Gastrocnemius medialis (tissue), 4 donors: ENCODE measurements at regions of chr17 and their contacts with region 1.

Region 1: DNA sequence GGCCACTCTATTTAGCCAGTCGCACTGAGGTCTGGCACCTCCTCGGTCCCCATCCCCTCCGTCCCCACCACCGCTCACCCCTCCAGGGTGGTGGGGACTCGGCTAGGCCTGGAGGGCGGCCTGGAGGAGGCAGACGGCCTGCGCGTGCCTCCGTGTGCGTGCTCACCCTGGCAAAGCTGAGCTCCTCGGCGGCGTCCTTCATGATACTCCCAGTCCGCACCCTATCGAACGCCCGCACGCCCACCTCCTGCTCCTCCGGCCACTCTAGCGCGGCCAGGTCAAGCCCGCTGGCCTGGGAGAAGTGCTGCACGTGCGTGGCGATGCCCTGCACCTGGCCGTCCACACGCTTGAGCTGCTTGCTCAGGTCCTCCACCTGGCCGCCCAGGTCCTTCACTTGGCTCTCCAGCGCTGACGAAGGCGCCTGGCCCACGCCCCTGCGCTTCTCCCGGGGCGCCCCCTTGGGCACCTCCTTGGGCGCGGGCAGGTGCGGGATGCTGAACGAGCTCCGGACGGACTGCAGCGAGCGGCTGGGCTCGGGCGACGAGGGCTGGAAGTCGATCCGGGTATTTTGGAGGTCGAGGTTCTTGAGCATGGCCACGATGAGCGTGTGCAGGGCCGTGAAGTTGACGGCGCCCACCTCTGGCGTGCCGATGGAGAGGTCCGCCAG is 644 bp downstream of the QRICH2 start:
- DNase-seq: no peak
- ATAC-seq: no peak
- H3K4me3 ChIP-seq: no peak overlapping the region
- H3K27ac ChIP-seq: no peak overlapping the region
- H3K4me1 ChIP-seq: no peaks in the 10 kb centered on the region
- H3K27me3 ChIP-seq: no peaks in the 10 kb centered on the region
- CTCF ChIP-seq: no peak
- POLR2A ChIP-seq: no peak

Region 2: DNA sequence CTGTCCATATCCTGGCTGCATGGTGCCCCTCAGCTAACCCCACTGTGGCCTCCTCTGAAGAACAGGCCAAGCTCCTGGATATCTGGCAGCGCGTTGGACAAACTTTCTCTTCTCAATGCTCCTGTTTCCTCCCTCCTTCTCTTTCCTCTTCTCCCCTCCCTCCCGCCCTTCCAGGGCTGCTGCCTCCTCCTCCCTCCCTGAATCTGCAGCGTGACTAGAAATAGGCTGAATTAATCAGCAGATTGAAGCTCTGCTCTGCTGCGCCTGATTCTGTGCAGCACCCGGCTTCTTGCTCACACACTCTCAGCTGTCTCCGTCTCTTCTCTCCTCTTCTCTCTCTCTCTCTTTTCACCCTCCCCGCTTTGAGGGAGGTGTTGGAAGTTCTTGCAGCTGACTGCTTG is 831.2 kb before region 1 on chr17:
- in situ Hi-C with region 1: no loop called
- intact Hi-C with region 1: no loop called
- DNase-seq: no peak
- ATAC-seq: peak; percentile 46 to 73
- H3K4me3 ChIP-seq: peak overlapping the region in 1 of 4 donors; percentile 21
- H3K27ac ChIP-seq: peak overlapping the region; percentile 67 to 81 (median 72)
- H3K4me1 ChIP-seq: peaks cover 69 to 74% of the 10 kb centered on the region in 2 donors
- H3K27me3 ChIP-seq: no peaks in the 10 kb centered on the region
- CTCF ChIP-seq: no peak
- POLR2A ChIP-seq: no peak

Region 3: DNA sequence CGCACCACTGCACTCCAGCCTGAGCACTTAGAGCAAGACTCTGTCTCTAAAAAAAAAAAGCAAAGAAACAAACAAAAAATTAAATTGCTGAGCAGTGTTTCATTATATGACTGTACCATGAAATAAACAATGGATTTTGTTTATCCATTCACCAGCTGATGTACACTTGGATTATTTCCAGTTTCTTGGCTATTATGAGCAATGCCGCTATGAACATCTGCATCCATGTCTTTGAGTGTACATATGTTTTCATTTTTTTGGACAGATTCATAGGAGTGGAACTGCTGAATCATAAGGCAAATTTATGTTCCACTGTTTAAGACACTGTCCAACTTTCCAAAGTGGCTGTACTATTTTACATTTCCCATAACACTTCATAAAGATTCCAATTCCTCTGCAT is 75.1 kb before region 1 on chr17:
- in situ Hi-C with region 1: no loop called
- intact Hi-C with region 1: no loop called
- DNase-seq: no peak
- ATAC-seq: no peak
- H3K4me3 ChIP-seq: no peak overlapping the region
- H3K27ac ChIP-seq: no peak overlapping the region
- H3K4me1 ChIP-seq: peaks cover 3 to 6% of the 10 kb centered on the region in 2 donors
- H3K27me3 ChIP-seq: no peaks in the 10 kb centered on the region
- CTCF ChIP-seq: no peak
- POLR2A ChIP-seq: no peak

Region 4: DNA sequence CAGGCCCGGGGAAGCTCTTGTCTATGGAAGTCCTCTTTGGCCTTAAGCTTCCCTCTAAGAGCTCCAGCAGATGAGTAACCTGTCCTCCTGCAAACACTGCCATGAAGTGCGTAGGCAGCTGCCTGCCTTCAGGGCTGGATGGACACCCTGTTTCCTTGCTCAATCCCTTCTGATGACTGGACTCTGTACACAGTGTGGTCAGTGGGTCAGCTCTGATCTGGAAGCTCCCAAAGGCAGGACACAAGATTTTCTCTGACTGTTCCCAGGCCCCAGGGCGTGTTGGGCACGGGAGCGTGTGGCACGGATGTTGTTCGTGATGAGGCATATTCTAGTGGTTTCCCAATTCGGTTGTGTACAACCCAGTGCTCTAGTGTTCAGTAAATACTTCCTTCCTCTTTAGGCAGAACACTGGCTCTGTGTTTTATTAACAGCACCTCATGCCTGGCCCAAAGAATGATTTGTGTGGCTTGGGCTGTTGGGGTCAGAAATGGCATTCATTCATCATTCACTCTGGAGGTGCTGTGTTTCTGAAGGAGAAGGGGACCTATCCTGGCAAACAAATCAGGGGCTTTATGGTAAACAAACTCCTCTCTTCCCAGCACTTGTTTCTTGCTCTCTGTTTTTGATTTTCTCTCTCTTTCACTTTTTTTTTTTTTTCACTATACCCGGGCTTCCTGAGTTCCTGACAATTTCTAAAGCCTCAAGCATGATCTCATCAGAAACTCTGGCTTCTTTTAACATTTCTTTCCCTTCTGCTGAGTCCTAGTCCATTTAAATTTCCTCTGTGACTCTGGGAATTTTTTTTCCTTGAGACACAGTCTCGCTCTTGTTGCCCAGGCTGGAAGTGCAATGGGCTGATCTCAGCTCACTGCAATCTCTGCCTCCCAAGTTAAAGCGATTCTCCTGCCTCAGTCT is 55.1 kb before region 1 on chr17:
- in situ Hi-C with region 1: no loop called
- intact Hi-C with region 1: no loop called
- DNase-seq: peak; percentile 95 to 97
- ATAC-seq: peak; percentile 85 to 88
- H3K4me3 ChIP-seq: peak overlapping the region in 1 of 4 donors; percentile 4
- H3K27ac ChIP-seq: peak overlapping the region; percentile 90 to 97 (median 94)
- H3K4me1 ChIP-seq: peaks cover 49 to 52% of the 10 kb centered on the region in 2 donors
- H3K27me3 ChIP-seq: no peaks in the 10 kb centered on the region
- CTCF ChIP-seq: no peak
- POLR2A ChIP-seq: peak; percentile 60 to 72

Region 5: DNA sequence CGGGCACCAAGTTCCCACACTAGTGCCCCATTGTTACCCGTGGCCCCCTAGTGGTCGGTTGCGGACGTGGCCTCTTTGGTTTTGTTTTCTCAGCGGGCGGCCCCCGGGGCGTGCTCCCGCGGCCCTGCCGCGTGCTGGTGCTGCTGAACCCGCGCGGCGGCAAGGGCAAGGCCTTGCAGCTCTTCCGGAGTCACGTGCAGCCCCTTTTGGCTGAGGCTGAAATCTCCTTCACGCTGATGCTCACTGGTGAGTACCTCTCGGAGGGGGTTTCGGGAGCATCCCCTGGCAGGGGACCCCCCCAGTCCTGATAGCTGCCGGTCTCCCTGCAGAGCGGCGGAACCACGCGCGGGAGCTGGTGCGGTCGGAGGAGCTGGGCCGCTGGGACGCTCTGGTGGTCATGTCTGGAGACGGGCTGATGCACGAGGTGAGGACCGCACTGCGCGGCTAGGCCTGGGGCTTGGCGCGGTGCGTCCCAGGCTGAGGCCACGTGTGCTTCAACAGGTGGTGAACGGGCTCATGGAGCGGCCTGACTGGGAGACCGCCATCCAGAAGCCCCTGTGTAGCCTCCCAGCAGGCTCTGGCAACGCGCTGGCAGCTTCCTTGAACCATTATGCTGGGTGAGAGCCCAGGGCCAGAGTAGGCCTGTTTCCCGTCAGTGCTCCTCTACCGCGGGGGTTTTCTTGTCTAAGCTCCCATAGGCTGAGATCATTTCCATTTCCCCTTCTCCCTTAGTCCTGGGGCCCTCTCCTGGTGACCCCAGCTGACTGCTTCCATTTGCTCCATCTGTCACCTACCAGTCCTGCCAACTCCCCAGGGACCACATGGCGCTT is 78.7 kb after region 1 on chr17:
- in situ Hi-C with region 1: no loop called
- intact Hi-C with region 1: loop called (anchors 5 kb)
- DNase-seq: peak; percentile 54 to 59
- ATAC-seq: peak; percentile 30 to 49
- H3K4me3 ChIP-seq: peak overlapping the region; percentile 44 to 69 (median 62)
- H3K27ac ChIP-seq: peak overlapping the region in 2 of 4 donors; percentile 64 to 70
- H3K4me1 ChIP-seq: peaks cover 29 to 33% of the 10 kb centered on the region in 2 donors
- H3K27me3 ChIP-seq: peaks cover 0 to 12% (median 5%) of the 10 kb centered on the region in 3 donors
- CTCF ChIP-seq: peak; percentile 76 to 91 (median 89)
- POLR2A ChIP-seq: no peak

Region 6: DNA sequence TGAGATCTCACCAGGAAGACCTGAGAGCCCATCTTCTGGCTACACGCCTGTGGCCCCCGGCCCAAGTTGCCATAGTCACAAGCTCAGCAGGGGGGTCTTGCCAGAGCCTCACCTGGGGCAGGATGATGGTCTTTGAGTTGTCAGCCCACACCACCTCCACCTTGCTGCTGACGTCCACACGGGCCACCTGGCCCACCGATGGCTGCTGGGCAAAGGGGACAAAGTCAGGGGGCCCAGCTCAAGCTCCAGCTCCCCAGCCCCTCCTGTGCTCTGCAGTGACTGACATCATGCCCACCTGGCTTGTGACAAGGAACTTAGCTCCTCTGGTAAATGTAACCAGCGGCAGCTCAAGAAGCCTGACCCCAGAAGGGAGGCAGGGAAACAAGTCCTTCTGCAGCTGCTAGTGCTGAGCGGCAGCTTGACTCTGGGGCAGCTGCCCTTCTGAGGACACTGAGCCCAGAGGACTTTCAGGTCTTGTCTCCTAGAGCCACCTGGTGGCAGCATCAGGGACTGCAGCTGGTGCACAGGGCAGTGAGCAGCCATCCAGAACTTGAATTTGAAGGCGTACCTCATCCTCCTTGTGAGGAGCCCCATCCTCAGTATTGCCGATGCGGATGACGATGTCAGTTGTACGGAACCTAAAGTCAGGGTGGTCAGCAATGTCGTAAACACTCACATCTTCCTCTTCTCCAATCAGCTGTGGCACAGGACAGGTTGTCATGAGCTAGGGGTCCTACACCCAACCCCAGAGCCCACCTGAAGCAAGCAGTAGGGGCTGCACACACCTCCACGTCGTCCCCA is 90.5 kb after region 1 on chr17:
- in situ Hi-C with region 1: loop called (anchors 5 kb)
- intact Hi-C with region 1: loop called (anchors 2 kb)
- DNase-seq: peak; percentile 69 to 85
- ATAC-seq: peak; percentile 87 to 95
- H3K4me3 ChIP-seq: no peak overlapping the region
- H3K27ac ChIP-seq: peak overlapping the region in 2 of 4 donors; percentile 30 to 31
- H3K4me1 ChIP-seq: peaks cover 0 to 5% of the 10 kb centered on the region in 2 donors
- H3K27me3 ChIP-seq: no peaks in the 10 kb centered on the region
- CTCF ChIP-seq: peak; percentile 96 to 98 (median 97)
- POLR2A ChIP-seq: no peak

Region 7: DNA sequence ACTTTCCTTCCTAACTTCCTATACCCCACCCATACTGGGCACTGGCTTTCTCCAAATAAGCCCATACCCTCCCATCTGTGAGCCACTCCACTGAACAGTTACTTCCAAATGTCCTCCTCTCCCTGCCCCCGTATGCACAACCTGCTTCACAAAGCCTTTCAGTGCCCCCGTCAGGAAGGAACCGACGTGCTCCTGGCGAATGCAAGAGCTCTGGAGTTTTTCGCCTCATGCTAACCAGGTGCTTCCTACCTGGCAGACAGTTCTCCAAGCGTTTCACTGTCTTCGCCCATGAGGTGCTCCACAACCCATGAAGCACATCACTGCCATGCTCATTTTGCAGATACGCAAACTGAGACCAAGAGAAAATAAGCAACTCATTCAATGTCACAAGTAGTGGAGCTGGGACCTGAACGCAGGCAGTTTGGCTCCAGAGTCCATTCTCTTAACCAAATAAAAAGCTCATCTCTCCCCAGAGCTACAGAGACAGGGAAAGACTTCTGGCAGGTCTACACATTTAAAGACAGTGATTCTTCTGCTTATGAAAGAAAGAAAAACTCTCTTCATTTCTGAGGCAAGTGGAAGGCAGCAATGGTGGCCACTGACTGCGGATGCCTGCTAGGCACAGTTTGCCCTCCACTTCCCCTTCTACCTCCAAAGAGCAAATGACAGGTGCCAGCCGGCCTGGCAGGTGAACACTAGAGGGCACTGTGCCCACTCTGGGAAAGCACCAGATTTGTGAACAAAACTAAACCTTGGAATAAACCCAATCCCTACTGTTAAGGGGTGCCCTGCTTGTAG is 100.8 kb after region 1 on chr17:
- in situ Hi-C with region 1: loop called in 1 of 4 experiments (anchors 5 kb)
- intact Hi-C with region 1: no loop called
- DNase-seq: peak in 1 of 2 donors; percentile 65
- ATAC-seq: peak in 1 of 2 donors; percentile 33
- H3K4me3 ChIP-seq: no peak overlapping the region
- H3K27ac ChIP-seq: no peak overlapping the region
- H3K4me1 ChIP-seq: peaks cover 35 to 47% of the 10 kb centered on the region in 2 donors
- H3K27me3 ChIP-seq: no peaks in the 10 kb centered on the region
- CTCF ChIP-seq: peak; percentile 65 to 77 (median 66)
- POLR2A ChIP-seq: no peak

Region 8: DNA sequence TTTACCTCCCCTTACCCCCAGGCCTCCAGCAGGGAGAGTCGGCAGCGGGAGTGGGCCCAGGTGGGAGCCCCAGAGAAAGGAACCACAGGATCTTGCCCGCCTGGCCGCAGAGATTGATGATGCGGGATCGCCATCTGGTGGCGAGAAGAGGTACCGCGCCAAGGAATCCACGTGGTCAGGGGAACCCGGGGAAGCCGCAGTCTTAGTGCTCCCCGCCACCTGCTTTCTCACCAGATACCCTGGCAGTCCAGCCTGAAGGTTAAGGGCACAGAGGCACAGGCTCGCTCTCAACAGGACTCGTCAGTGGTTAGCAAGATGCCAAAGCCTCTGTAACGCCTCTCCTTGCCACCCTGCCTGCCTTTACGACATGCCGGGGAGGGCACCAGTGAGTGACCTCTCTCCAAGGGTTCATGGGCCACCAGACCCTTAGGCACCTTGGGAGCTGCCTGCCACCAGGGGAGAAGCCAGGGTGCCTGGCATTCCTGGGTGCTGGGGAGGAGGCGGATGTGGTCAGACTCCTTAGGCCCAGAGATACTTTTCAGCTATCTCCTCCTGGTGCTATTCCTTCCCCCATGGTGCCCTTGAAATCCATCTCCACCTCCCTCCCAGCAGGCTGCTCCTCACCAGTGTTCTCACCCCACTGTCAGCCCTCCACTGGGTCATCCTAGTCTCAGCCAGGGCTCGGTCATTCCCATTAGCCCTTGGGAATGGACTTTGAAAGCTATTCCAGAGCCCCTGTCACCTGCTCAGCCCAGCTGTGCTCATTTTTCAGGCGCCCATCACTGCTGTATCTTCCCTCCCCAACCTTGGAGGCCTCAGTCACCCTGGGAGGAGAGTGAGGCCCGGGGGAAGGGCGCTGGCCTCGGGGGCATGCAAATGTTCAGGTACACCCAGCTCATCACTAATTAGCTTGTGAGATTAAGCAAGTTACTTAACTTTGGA is 199.2 kb after region 1 on chr17:
- in situ Hi-C with region 1: no loop called
- intact Hi-C with region 1: loop called (anchors 5 kb)
- DNase-seq: peak; percentile 63 to 77
- ATAC-seq: peak; percentile 71 to 77
- H3K4me3 ChIP-seq: no peak overlapping the region
- H3K27ac ChIP-seq: peak overlapping the region in 3 of 4 donors; percentile 40 to 72 (median 68)
- H3K4me1 ChIP-seq: peaks cover 3 to 11% of the 10 kb centered on the region in 2 donors
- H3K27me3 ChIP-seq: no peaks in the 10 kb centered on the region
- CTCF ChIP-seq: peak; percentile 94 to 99 (median 96)
- POLR2A ChIP-seq: no peak